Right ventricle myocardium inferior (tissue), 1 donor: ENCODE measurements at regions of chr20 and their contacts with region 1.

Region 1: DNA sequence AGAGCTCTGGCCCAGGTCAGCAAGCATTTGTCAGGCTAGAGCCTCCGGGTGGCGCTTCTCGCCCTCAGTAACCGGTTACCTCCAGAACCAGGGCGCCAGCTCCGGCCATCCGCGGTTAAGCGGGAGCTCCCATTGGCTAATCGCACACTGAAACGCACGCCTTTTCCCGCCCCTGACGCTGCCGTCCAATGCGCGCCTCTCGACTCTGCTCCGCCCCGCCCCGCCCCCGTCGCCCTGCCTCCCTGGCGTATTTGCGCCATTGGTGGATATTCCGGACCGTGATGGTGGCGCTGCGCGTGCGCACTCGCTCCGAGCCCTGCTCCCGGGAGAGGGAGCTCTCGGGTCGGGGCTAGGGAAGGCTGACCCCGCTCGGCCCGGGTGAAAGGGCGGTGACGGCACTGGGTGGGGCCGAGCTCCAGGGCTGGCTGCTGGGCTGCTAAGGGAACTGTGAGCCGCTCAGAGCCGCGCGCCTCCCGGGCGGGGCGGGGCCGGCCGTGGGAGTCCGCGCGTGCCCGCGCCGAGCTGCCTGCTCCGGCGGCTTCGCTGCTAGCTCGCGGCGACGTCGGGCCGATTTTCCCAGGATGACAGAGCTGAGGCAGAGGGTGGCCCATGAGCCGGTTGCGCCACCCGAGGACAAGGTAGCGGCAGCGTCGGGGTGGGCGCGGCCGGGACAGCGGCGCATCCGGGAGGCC is at the start of gene CDS2:
- DNase-seq: peak; percentile 100
- ATAC-seq: peak; percentile 98
- total RNA-seq, gene CDS2: 57.2 TPM

Region 2: GRCh38 chr20:5041433-5041832 is 85.2 kb before region 1 on chr20:
- intact Hi-C with region 1: no loop called
- DNase-seq: no peak
- ATAC-seq: no peak

Region 3: DNA sequence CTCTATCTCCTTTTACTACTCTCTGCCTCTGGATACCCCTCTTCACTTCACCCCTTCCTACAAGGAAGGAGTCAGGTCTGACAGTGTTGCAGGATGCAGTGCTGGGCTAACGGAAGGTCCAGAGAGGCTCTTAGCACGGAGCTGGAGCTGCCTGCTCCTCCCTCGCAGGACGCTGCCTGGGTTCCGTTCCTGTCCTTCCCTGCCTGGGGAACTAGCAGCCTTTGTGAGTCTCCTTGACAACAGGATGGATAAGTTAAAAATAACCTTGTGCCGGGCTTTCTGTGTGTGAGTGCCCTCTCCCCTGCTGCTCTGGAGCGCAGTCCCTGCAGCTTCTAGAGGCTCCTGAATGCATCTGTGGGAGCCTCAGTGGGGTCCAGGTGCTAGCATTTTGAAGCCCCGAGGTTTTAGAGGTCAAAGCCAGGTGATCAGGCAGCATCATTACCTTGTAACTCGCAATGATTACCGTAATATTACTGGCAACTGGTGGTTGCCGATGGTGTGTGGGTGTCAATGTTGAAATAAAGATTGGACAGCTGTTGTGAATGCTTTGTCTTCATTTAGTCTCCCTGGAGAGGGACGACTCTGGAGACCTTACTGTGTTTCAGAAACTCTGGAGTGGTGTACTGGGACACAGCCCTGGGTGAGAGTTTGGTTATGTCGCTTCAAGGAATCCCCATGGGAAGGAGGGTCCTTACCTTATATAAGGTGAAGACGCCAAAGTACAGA is 44.6 kb after region 1 on chr20:
- intact Hi-C with region 1: loop called (anchors 2 kb)
- DNase-seq: no peak
- ATAC-seq: peak; percentile 79

Region 4: GRCh38 chr20:5191829-5192569 is 65.3 kb after region 1 on chr20:
- intact Hi-C with region 1: loop called (anchors 1 kb)
- DNase-seq: no peak
- ATAC-seq: peak; percentile 61

Region 5: DNA sequence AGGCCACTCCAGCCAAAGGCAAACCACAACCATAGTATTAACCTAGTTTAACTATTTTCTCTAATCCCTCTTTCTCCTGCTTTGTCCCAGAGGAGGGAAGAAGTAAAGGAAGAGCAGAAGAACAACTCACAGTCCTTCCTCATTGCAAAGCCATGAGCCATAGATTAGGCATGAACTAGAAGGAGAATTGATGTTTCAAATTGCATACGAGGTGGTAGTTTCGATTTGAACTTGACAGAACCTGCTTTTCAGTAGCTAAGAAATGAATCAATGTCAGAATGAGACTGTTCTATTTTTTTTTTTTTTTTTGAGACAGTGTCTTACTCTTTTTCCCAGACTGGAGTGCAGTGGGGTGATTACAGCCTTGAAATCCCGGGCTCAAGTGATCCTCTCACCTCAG is 141.8 kb after region 1 on chr20:
- intact Hi-C with region 1: no loop called
- DNase-seq: no peak
- ATAC-seq: no peak

Region 6: DNA sequence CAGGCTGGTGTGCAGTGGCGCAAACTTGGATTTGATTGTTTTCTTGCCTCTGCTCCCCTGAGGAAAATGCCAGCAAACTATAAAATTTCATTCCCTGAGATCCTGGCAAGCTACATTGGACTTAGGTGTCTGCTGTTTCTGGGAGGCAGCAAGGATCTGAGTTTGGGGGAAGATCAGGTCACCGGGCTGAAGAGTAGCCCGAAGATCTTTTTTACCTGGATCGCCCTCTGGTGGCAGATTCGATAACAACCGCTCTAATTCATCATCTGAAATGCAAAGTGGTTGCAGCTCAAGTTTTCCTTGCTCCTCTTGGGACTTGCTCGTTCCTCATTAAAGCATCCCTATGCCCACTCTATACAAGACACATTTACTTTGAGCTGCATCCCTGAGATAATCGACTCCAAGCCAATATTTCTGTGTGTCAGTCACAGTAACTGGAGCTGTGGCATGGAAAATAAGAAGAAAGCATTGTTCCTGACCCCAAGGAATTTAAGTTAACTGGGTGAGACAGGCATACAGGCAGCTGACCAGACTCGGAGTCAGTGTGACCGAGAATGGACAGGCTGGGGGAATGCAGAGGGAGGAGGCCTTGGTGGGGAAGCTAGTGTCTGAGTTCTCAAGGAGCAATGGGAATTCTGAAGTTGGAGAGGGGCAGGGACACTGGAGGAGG is 321.9 kb after region 1 on chr20:
- intact Hi-C with region 1: loop called (anchors 5 kb)
- DNase-seq: no peak
- ATAC-seq: no peak

Region 7: DNA sequence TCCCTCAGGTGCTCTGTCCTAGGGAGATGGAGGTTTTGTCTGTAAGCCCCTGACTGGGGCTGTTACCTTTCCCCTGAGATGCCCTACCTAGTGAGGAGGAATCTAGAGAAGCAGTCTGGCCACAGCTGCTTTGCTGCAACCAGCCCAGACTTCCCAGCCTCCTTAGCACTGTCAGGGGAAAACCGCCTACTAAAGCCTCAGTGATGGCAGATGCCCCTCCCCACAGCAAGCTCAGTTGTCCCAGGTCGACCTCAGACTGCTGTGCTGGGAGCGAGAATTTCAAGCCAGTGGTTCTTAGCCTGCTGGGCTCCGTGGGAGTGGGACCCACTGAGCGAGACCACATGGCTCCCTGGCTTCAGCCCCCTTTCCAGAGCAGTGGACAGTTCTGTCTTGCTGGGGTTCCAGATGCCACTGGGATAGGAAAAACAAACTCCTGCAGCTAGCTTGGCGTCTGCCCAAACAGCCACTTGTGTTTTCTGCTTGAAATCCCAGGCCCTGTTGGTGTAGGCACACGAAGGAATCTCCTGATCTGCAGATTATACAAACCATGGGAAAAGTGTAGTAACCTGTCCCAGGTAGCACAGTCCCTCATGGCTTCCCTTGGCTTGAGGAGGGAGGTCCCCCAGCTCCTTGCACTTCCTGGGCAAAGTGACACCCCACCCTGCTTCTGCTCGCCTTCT is 336.5 kb after region 1 on chr20:
- intact Hi-C with region 1: no loop called
- DNase-seq: no peak
- ATAC-seq: no peak